ENCODE measurements at regions of chr10 and their contacts with region 1.

Region 1: DNA sequence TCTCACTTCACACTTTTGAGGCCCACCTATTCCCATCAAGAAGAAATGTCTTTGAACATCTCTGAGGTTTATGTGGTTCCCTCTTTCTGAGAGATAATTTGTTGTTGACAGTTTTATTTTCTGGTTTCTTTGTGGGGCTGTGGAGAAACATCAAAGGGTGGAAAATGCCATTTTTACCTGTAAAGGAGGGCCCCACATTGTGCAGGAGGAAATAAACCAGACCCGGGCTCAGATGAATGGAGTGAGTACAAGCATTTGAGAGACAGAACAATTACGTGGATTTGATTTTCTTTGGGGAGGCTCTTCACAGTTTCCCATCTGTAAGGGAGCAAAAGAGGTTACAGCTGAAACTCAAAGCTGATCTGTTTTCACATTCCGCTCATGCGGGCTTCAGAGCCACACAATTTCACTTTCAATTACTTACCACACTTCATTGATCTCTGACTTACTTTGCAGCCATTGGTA is 29.8 kb downstream of the ITPRIP start:
- DNase-seq: peak; percentile 59
- ATAC-seq: peak; percentile 73
- H3K4me3 Mint-ChIP-seq: peak overlapping the region; percentile 1
- H3K27ac Mint-ChIP-seq: peak overlapping the region; percentile 74
- H3K4me1 Mint-ChIP-seq: peaks cover 60% of the 10 kb centered on the region
- H3K27me3 Mint-ChIP-seq: peaks cover 5% of the 10 kb centered on the region
- CTCF ChIP-seq: no peak

Region 2: GRCh38 chr10:103696411-103697145 is 611.9 kb before region 1 on chr10:
- CTCF ChIA-PET with region 1: no interaction called
- POLR2A ChIA-PET with region 1: no interaction called
- intact Hi-C with region 1: no loop called
- DNase-seq: peak; percentile 89
- ATAC-seq: peak; percentile 90
- H3K4me3 Mint-ChIP-seq: peak overlapping the region; percentile 1
- H3K27ac Mint-ChIP-seq: peak overlapping the region; percentile 8
- H3K4me1 Mint-ChIP-seq: peaks cover 19% of the 10 kb centered on the region
- H3K27me3 Mint-ChIP-seq: peaks cover 4% of the 10 kb centered on the region
- CTCF ChIP-seq: peak; percentile 53

Region 3: GRCh38 chr10:103739039-103739764 is 569.3 kb before region 1 on chr10:
- CTCF ChIA-PET with region 1: no interaction called
- POLR2A ChIA-PET with region 1: no interaction called
- intact Hi-C with region 1: no loop called
- DNase-seq: no peak
- ATAC-seq: no peak
- H3K4me3 Mint-ChIP-seq: no peak overlapping the region
- H3K27ac Mint-ChIP-seq: no peak overlapping the region
- H3K4me1 Mint-ChIP-seq: no peaks in the 10 kb centered on the region
- H3K27me3 Mint-ChIP-seq: no peaks in the 10 kb centered on the region
- CTCF ChIP-seq: no peak

Region 4: DNA sequence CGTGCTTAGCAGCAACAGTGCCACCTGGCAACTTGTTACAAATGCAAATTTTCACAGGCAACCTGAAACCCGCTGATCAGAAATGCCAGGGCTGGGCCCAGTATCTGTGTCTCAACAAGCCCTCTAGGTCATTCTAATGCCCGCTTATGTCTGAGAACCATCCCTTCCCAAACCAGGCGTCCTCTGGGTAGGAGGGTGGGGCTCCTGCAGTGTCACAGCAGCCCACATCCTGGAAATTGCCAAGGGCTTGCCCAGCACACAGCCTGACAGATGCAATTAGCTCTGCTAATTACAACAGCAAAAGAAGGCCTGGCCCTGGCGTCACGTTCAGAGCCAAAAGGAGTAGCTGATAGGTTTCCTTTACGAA is 13.9 kb after region 1 on chr10:
- CTCF ChIA-PET with region 1: interaction called, 28 read pairs
- POLR2A ChIA-PET with region 1: interaction called, 21 read pairs
- intact Hi-C with region 1: no loop called
- DNase-seq: peak; percentile 69
- ATAC-seq: peak; percentile 66
- H3K4me3 Mint-ChIP-seq: peak overlapping the region; percentile 16
- H3K27ac Mint-ChIP-seq: peak overlapping the region; percentile 82
- H3K4me1 Mint-ChIP-seq: peaks cover 88% of the 10 kb centered on the region
- H3K27me3 Mint-ChIP-seq: no peaks in the 10 kb centered on the region
- CTCF ChIP-seq: no peak

Region 5: GRCh38 chr10:104328896-104329710 is 20.6 kb after region 1 on chr10:
- CTCF ChIA-PET with region 1: interaction called, 23 read pairs
- POLR2A ChIA-PET with region 1: interaction called, 8 read pairs
- intact Hi-C with region 1: no loop called
- DNase-seq: peak; percentile 94
- ATAC-seq: peak; percentile 86
- H3K4me3 Mint-ChIP-seq: peak overlapping the region; percentile 73
- H3K27ac Mint-ChIP-seq: peak overlapping the region; percentile 98
- H3K4me1 Mint-ChIP-seq: peaks cover 96% of the 10 kb centered on the region
- H3K27me3 Mint-ChIP-seq: no peaks in the 10 kb centered on the region
- CTCF ChIP-seq: no peak

Region 6: GRCh38 chr10:104337974-104338735 is 29.7 kb after region 1 on chr10 and contains the start of gene ITPRIP:
- CTCF ChIA-PET with region 1: interaction called, 35 read pairs
- POLR2A ChIA-PET with region 1: interaction called, 13 read pairs
- intact Hi-C with region 1: no loop called
- DNase-seq: peak; percentile 84
- ATAC-seq: peak; percentile 76
- H3K4me3 Mint-ChIP-seq: peak within 1 kb of the TSS; percentile 86
- H3K27ac Mint-ChIP-seq: peak within 1 kb of the TSS; percentile 100
- H3K4me1 Mint-ChIP-seq: peaks cover 45% of the 10 kb centered on the region
- H3K27me3 Mint-ChIP-seq: no peaks in the 10 kb centered on the region
- CTCF ChIP-seq: no peak
- total RNA-seq, gene ITPRIP: 18.3 to 18.9 TPM

Region 7: GRCh38 chr10:104345941-104346340 is 37.5 kb after region 1 on chr10:
- CTCF ChIA-PET with region 1: interaction called, 191 read pairs
- POLR2A ChIA-PET with region 1: interaction called, 6 read pairs
- intact Hi-C with region 1: loop called (anchors 1 kb)
- DNase-seq: no peak
- ATAC-seq: peak; percentile 28
- H3K4me3 Mint-ChIP-seq: no peak overlapping the region
- H3K27ac Mint-ChIP-seq: no peak overlapping the region
- H3K4me1 Mint-ChIP-seq: peaks cover 12% of the 10 kb centered on the region
- H3K27me3 Mint-ChIP-seq: no peaks in the 10 kb centered on the region
- CTCF ChIP-seq: no peak